Activated CD4-positive, alpha-beta T cell treated with anti-CD3 and anti-CD28 coated beads for 36 hours (primary cell): ENCODE measurements at regions of chr21 and their contacts with region 1.

Region 1: DNA sequence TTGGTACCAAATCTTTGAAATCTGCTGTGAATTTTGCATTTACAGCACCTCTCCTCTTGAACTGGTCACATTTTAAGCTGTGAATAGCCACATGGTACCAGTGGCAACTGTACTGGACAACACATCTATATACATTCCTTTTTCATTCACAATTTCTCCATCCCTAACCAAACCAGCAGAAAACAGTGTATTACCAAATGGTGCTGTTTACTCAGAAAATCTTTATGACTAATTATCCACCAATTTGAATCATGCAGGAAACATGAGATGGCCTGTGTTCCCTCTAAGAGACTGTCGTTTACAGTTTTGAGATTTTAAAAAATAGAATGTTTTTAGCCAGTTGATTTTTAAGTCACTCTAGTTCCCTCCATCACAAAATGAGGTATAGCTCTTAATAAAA is 17.6 kb upstream of the CCT8 start:
- DNase-seq: no peak
- ATAC-seq: peak; percentile 71
- H3K4me3 Mint-ChIP-seq: no peak overlapping the region
- H3K27ac Mint-ChIP-seq: no peak overlapping the region
- H3K4me1 Mint-ChIP-seq: peaks cover 17% of the 10 kb centered on the region
- H3K27me3 Mint-ChIP-seq: no peaks in the 10 kb centered on the region

Region 2: DNA sequence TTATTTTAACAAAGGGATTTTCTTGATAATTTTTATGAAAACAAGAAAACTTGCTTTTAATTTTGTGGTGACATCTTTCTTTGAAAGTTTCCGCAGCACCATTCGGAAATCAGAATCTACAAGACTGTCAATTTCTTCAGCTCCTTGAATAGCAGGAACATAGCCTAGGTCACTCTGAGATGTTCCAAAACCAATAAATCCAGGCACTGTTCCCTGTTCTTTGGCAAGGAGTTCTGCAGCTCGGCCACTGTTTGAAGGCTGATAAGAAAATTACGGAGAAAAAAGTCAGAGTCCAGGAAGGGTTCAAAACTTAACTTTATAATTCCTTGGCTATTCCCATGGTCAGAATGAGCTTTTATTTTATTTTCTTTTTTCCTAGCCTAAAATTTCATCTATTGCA is 104.4 kb before region 1 on chr21:
- CTCF ChIA-PET with region 1: no interaction called
- POLR2A ChIA-PET with region 1: no interaction called
- intact Hi-C with region 1: no loop called
- DNase-seq: no peak
- ATAC-seq: no peak
- H3K4me3 Mint-ChIP-seq: no peak overlapping the region
- H3K27ac Mint-ChIP-seq: no peak overlapping the region
- H3K4me1 Mint-ChIP-seq: peaks cover 38% of the 10 kb centered on the region
- H3K27me3 Mint-ChIP-seq: no peaks in the 10 kb centered on the region

Region 3: GRCh38 chr21:29053011-29053553 is 38.0 kb before region 1 on chr21:
- CTCF ChIA-PET with region 1: no interaction called
- POLR2A ChIA-PET with region 1: no interaction called
- intact Hi-C with region 1: no loop called
- DNase-seq: no peak
- ATAC-seq: peak; percentile 16
- H3K4me3 Mint-ChIP-seq: no peak overlapping the region
- H3K27ac Mint-ChIP-seq: peak overlapping the region; percentile 43
- H3K4me1 Mint-ChIP-seq: no peaks in the 10 kb centered on the region
- H3K27me3 Mint-ChIP-seq: no peaks in the 10 kb centered on the region

Region 4: GRCh38 chr21:29155118-29155932 is 64.3 kb after region 1 on chr21:
- CTCF ChIA-PET with region 1: interaction called, 3 read pairs
- POLR2A ChIA-PET with region 1: no interaction called
- intact Hi-C with region 1: loop called in 1 of 2 experiments (anchors 5 kb)
- DNase-seq: no peak
- ATAC-seq: no peak
- H3K4me3 Mint-ChIP-seq: no peak overlapping the region
- H3K27ac Mint-ChIP-seq: no peak overlapping the region
- H3K4me1 Mint-ChIP-seq: no peaks in the 10 kb centered on the region
- H3K27me3 Mint-ChIP-seq: peaks cover 2% of the 10 kb centered on the region

Region 5: GRCh38 chr21:29245104-29245643 is 154.1 kb after region 1 on chr21:
- CTCF ChIA-PET with region 1: no interaction called
- POLR2A ChIA-PET with region 1: no interaction called
- intact Hi-C with region 1: loop called in 1 of 2 experiments (anchors 5 kb)
- DNase-seq: peak; percentile 53
- ATAC-seq: peak; percentile 99
- H3K4me3 Mint-ChIP-seq: no peak overlapping the region
- H3K27ac Mint-ChIP-seq: peak overlapping the region; percentile 28
- H3K4me1 Mint-ChIP-seq: peaks cover 13% of the 10 kb centered on the region
- H3K27me3 Mint-ChIP-seq: peaks cover 8% of the 10 kb centered on the region

Region 6: DNA sequence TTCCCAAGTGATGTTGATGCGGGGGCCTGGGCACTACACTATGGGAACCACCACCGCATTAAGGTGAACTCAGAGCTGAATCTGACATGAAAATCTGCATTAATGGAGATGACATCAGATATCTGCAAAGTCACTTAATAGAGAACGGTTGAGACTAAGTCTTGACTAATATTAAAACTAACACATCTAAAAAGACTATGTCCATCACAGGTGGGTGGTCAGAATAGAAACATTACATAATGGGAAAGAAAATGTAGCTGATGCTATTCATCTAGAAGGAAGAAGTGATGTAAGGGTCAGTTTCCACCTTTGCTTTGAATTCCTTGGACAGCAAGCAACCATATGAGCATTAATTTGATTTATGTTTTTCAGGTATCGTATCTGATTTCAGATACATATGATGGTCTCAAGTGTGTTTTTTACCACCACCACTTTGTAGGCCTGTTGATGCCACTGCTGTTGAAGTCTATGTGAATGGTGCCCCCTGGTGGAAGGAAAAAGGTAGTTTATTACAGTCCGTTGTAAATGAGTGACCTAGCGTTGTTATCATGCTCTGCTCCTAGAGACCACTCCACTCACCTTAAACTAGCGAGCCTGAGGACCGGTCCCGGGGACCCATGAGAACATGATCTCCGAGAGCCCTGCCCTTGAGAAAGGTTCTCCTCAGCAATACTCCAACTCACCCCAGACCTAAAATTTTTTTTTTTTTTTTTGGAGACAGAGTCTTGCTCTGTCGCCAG is 281.2 kb after region 1 on chr21:
- CTCF ChIA-PET with region 1: interaction called, 23 read pairs
- POLR2A ChIA-PET with region 1: no interaction called
- intact Hi-C with region 1: loop called (anchors 1 kb)
- DNase-seq: peak; percentile 61
- ATAC-seq: peak; percentile 65
- H3K4me3 Mint-ChIP-seq: no peak overlapping the region
- H3K27ac Mint-ChIP-seq: peak overlapping the region; percentile 38
- H3K4me1 Mint-ChIP-seq: peaks cover 30% of the 10 kb centered on the region
- H3K27me3 Mint-ChIP-seq: no peaks in the 10 kb centered on the region

Region 7: GRCh38 chr21:29849735-29850176 is 758.7 kb after region 1 on chr21:
- CTCF ChIA-PET with region 1: interaction called, 6 read pairs
- POLR2A ChIA-PET with region 1: no interaction called
- intact Hi-C with region 1: loop called (anchors 1 to 2 kb)
- DNase-seq: peak; percentile 64
- ATAC-seq: peak; percentile 95
- H3K4me3 Mint-ChIP-seq: no peak overlapping the region
- H3K27ac Mint-ChIP-seq: no peak overlapping the region
- H3K4me1 Mint-ChIP-seq: no peaks in the 10 kb centered on the region
- H3K27me3 Mint-ChIP-seq: peaks cover 14% of the 10 kb centered on the region